Activated CD4-positive, alpha-beta T cell treated with anti-CD3 and anti-CD28 coated beads, Interleukin-2, amount 10 ng/mL, durations not matched to agents 24 days and 14 days (primary cell): ENCODE measurements at regions of chr1 and their contacts with region 1.

Region 1: DNA sequence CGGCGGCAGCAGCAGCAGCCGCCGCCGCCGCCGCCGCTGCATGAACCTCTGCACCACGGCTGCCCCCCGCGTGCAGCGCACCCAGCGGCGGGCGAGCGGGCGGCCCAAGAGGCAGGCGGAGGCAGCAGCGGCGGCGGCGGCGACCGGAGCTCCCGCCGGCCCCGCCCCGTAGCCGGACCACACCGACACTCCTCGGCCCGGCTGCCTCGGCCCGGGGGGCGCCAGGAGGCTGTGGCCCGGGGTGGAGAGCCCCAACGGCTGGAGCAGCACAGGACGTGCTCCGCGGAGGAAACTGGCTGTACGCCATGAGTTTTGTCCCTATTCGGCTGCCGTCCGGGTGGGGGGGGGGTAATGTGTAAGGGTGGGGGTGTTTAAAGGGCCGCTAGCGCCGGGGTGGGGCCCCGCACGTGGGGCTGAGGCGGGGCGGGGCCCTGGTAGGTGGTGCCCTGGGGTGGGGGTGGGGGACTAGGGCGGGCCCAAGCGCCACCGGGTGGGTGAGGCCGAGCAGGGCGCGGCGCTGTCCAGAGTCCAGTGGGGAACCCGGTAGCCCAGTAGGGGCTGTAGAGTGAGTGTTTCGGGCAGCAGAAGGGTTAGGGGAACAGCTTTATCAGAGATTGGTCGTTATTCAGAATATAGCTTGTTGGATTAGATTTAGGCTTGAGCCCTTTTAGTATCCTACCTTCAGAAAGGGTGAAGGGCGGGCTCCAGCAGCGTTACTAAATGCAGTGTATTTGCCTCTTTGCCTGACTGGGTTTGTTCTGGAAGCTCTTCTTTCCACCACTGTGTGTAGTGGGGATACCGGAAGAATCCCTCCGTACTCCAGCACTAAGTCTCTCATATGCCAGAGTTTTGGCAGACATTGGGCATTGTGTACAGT is at the start of gene FAM78B:
- DNase-seq: peak; percentile 84
- H3K4me3 Mint-ChIP-seq: peak within 1 kb of the TSS; percentile 83
- H3K27ac Mint-ChIP-seq: peak within 1 kb of the TSS; percentile 50
- H3K4me1 Mint-ChIP-seq: peaks cover 21% of the 10 kb centered on the region
- H3K27me3 Mint-ChIP-seq: peaks cover 54% of the 10 kb centered on the region
- total RNA-seq, gene FAM78B: 1.6 and 1.9 TPM in 2 replicates

Region 2: GRCh38 chr1:165928075-165928731 is 238.7 kb before region 1 on chr1:
- intact Hi-C with region 1: loop called (anchors 5 kb)
- DNase-seq: peak; percentile 87
- H3K4me3 Mint-ChIP-seq: no peak overlapping the region
- H3K27ac Mint-ChIP-seq: peak overlapping the region; percentile 13
- H3K4me1 Mint-ChIP-seq: peaks cover 11% of the 10 kb centered on the region
- H3K27me3 Mint-ChIP-seq: peaks cover 10% of the 10 kb centered on the region

Region 3: GRCh38 chr1:166080967-166081870 is 85.7 kb before region 1 on chr1:
- intact Hi-C with region 1: loop called (anchors 2 kb)
- DNase-seq: peak; percentile 72
- H3K4me3 Mint-ChIP-seq: peak overlapping the region; percentile 31
- H3K27ac Mint-ChIP-seq: peak overlapping the region; percentile 17
- H3K4me1 Mint-ChIP-seq: peaks cover 30% of the 10 kb centered on the region
- H3K27me3 Mint-ChIP-seq: no peaks in the 10 kb centered on the region

Region 4: DNA sequence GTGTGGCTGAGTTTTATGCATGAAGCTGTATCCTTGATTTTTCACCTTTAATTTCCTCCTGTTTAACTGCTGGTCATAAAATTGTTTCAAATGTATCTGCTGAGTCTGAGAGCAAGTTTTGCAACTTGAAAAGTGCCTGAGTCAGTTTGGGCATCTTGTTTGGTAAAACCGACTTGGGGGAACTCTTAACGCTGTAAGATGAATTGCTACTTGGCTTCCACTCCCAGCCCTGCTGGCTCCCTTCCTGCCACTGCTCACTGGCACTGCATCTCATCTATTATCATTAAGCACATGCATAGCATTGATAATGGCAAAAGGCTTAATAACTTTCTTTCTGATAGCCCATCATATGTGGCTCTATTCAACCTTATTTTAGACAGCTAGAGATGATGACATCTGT is 35.6 kb after region 1 on chr1:
- intact Hi-C with region 1: no loop called
- DNase-seq: no peak
- H3K4me3 Mint-ChIP-seq: no peak overlapping the region
- H3K27ac Mint-ChIP-seq: no peak overlapping the region
- H3K4me1 Mint-ChIP-seq: no peaks in the 10 kb centered on the region
- H3K27me3 Mint-ChIP-seq: no peaks in the 10 kb centered on the region

Region 5: DNA sequence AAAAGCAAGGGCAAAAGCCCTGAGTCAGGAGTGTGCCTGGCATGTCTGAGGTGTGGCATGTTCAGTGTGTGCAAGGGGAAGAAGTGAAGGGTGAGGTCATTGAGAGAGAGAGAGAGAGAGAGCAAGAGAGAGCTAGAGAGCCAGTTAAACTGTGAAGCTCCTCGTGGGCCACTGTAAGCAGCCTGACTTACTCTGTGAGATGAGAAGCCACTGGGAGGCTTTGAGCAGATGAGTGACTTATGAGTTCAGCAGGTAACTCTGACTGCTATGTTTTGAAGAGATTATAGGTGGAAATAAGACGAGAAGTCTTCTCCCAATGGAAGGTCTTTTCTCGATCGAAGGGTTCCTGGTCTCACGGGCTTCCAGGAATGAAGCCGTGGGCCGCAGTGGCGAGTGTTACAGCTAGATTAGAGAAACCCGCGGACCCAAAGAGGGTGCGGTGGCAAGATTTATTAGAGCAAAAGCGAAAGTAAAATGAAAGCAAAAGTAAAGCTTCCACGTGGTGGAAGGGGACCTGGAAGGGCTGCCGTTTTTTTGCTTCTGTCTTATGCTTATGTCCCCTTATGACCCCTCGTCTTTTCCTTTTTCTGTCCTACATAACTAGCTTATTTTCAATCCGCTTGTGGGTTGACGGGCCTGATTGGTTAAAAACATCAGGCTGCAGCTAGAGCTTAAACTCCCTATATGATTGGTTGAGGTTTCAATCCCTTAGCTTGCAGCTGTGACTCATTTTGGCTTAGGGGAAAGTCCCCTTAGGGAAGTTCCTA is 322.9 kb after region 1 on chr1:
- intact Hi-C with region 1: loop called (anchors 10 kb)
- DNase-seq: peak; percentile 85
- H3K4me3 Mint-ChIP-seq: no peak overlapping the region
- H3K27ac Mint-ChIP-seq: no peak overlapping the region
- H3K4me1 Mint-ChIP-seq: peaks cover 9% of the 10 kb centered on the region
- H3K27me3 Mint-ChIP-seq: peaks cover 1% of the 10 kb centered on the region

Region 6: DNA sequence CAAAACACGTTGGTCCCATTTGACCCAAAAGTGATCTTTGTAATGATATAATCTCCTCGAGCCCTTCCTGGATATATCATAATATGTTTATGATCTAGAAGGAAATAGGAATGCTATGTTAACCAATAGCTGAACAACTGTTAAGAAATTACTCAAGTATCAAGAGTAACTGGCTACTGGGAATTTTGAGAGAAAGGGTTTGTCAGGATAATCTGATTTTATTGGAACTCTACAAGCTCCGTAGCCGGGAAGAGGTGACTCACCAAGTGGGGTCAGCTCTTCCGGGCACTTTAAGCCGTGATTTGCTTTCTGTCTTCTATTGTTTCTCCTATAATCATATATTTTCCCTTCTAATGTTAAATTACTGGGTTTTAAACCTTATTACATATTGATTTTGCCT is 421.8 kb after region 1 on chr1:
- intact Hi-C with region 1: no loop called
- DNase-seq: no peak
- H3K4me3 Mint-ChIP-seq: no peak overlapping the region
- H3K27ac Mint-ChIP-seq: no peak overlapping the region
- H3K4me1 Mint-ChIP-seq: no peaks in the 10 kb centered on the region
- H3K27me3 Mint-ChIP-seq: peaks cover 2% of the 10 kb centered on the region

Region 7: GRCh38 chr1:166975361-166976129 is 808.6 kb after region 1 on chr1 and contains the start of gene ILDR2:
- intact Hi-C with region 1: loop called (anchors 10 kb)
- DNase-seq: peak; percentile 87
- H3K4me3 Mint-ChIP-seq: peak within 1 kb of the TSS; percentile 96
- H3K27ac Mint-ChIP-seq: peak within 1 kb of the TSS; percentile 96
- H3K4me1 Mint-ChIP-seq: peaks cover 47% of the 10 kb centered on the region
- H3K27me3 Mint-ChIP-seq: peaks cover 32% of the 10 kb centered on the region
- total RNA-seq, gene ILDR2: 10.3 and 12.5 TPM in 2 replicates